ENCODE measurements at regions of chr5 and their contacts with region 1.

Region 1: GRCh38 chr5:160021831-160022446 is 13.0 kb downstream of the TTC1 start:
- DNase-seq: no peak
- H3K4me3 ChIP-seq: no peak overlapping the region
- CTCF ChIP-seq: peak; percentile 52

Region 2: DNA sequence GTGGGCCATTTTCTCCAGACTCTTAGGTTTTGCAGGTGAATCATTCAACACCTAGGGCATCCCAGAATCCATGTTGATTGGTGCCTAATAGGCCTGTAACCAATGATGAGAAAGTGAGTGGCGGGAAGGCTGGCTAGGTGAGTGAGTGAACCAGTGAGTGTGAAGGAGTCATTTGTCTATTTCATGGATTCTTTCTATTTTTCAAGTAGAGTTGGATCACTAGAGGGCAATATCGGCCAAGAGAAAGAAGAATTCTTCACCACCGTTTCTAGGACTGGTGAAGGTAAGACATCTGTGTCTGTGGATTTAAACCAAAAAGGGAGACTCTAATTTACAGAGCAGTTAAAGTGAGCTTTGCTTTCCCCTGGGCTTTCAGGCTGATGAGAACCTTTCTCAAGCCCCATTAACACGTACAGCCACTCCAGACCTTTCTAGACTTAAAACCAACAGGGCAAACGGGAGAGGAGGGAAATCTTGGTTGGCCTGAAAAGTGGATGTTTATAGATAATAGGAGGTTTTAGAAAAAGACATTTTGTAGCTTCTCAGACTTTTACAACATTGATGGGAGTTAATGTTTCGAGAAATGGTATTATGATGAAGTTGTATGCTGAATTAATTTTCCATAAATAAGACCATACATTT is 577.4 kb before region 1 on chr5:
- CTCF ChIA-PET with region 1: interaction called, 12 read pairs
- POLR2A ChIA-PET with region 1: no interaction called
- DNase-seq: no peak
- H3K4me3 ChIP-seq: no peak overlapping the region
- CTCF ChIP-seq: peak; percentile 28

Region 3: DNA sequence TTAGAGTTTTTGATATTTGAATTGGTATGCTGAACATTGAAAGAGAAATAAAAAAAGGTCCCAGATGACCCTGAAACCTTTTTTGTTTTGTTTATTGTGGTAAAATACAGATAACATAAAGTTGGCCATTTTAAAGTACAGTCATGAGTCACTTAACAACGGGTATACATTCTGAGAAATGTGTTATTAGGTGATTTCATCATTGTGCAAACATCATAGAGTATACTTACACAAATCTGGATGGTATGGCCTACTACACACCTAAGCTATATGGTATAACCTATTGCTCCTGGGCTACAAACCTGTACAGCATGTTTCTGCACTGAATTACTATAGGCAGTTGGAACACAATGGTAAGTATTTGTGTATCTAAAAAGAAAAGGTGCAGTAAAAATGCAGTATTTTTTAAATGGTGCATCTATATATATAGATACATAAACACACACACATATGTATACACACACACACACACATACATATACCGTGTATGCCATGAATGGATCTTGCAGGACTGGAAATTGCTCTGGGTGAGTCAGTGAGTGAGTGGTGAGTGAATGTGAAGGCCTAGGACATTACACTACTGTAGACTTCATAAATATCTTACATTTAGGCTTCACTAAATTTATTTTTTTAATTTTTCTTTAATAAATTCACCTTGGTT is 18.0 kb after region 1 on chr5:
- CTCF ChIA-PET with region 1: interaction called, 37 read pairs
- POLR2A ChIA-PET with region 1: no interaction called
- DNase-seq: no peak
- H3K4me3 ChIP-seq: no peak overlapping the region
- CTCF ChIP-seq: no peak

Region 4: DNA sequence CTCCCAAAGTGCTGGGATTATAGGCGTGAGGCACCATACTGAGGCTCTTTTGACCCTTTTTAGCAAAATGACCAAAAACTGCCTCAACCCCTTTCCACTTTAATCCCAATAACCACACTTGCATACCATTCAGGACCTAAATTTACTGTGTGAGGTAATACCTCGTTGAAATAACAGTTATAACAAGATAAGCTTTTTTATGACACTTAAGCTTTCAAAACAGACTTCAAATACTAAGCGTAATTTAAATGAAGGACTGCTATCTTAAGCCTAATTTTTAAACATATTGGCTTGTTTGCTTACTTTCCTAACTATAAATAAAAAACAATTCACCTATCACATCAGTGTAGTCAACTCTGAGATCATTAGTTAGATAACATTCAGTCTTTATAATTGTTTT is 59.6 kb after region 1 on chr5:
- CTCF ChIA-PET with region 1: interaction called, 18 read pairs
- POLR2A ChIA-PET with region 1: no interaction called
- DNase-seq: no peak
- H3K4me3 ChIP-seq: no peak overlapping the region
- CTCF ChIP-seq: no peak

Region 5: DNA sequence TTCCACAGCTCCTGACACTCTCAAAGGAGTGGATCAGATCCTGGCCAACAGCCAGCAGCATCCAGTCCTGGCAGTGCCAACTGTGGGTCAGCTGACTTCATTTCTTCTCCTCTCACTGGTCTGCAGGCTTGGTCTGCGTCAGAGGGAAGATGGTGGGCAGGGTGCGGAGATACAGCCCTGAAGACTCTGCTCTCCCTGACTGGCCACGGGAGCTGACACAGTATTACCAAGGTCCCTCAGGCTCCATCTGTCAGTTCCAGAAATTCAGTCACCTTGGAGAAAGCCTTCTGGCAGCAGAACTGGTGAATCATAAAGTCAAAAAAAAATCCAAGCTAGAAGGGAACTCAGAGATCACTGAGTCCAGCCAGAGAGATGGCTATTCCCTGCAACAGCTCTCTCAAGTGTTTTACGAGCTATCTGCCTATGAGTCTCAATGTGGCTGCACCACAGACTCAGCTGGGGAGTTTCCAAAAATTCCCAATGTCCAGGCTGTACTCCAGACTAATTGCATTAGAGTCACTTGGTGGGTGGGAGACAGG is 320.5 kb after region 1 on chr5:
- CTCF ChIA-PET with region 1: interaction called, 390 read pairs
- POLR2A ChIA-PET with region 1: no interaction called
- DNase-seq: peak; percentile 12
- H3K4me3 ChIP-seq: no peak overlapping the region
- CTCF ChIP-seq: no peak

Region 6: DNA sequence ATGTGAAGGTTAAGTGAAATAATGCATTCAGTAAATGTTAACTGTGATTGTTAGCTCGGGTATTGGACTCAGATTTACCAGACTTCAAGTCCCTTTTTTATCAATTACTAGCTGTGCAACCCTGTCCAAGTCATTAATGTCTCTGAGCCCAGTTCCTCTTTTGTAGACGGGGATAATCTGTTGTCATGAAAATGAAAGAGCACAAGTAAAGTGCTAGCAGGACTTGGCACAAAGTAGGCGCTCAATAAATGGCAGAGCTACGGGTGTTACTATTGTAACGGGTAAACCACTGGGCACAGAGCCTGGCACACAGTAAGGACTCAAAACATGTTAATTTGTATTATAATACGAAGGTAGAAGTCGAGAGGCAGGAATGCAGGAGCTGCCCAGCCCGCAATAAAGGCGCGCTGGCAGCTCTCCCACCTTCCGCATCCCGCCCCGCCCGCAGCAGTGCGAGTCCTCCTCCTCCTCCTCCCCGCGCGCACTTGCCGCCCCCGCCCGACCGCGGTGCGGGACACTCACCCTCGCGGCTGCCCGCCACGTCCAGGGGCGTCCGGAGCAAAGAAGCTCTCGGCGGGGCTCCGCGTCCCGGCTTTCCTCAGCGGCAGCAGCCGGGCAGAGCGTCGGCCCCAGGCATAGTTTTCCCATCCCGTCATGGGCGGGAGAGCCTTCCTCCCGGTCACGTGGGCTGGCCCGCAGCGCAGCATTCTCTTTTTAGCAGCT is 348.2 kb after region 1 on chr5 and contains the start of gene C1QTNF2:
- CTCF ChIA-PET with region 1: interaction called, 15 read pairs
- POLR2A ChIA-PET with region 1: no interaction called
- DNase-seq: no peak
- H3K4me3 ChIP-seq: peak within 1 kb of the TSS; percentile 63
- CTCF ChIP-seq: no peak

Region 7: DNA sequence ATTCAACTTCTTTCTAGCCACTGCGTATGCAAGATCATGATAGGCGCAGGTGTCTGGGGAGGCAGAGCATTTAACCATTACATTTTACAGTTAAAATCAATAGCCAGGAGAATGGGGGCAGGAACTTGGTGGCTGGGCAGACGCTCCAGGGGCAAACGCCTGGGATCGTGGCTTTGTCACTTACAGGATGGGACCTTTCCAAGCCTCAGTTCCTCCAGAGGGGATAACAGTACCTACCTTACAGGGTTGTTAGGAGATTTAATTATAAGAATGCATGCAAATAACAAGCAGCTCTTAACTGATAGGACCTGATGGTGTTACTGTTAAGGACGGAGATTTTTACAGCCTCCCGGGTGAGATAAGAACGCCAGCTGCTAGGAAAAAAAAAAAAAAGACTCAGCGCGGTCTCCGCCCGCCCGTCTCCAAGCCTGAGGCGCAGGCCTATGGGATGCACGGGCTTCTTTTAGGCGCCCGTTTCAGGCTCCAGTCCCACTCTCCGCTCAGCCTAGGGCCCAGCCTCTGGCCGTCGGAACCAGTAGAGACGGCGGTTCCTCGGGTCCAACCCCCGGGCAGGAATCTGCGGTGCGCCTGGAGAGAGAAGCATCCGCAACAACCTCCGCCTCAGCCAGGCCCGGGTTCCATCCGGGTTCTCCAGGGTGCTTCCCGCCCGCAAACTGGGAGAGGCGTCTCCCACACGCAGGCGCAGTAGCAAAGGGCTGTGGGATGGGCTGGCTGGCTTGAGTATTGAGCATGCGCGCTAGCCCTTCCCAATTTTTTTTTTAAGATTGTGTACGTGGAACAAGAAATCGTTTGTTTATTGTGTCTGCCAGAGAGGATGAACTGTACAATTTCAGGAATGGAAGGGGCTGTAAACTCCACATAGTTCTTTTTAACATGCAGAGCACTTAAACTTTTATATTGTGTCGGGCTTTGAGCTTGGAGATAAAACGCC is 377.7 kb after region 1 on chr5 and contains the start of gene FAM200C:
- CTCF ChIA-PET with region 1: interaction called, 270 read pairs
- POLR2A ChIA-PET with region 1: no interaction called
- DNase-seq: peak; percentile 51
- H3K4me3 ChIP-seq: peak within 1 kb of the TSS; percentile 87
- CTCF ChIP-seq: no peak